PC-9 (cell line): ENCODE measurements at regions of chr1 and their contacts with region 1.

Region 1: DNA sequence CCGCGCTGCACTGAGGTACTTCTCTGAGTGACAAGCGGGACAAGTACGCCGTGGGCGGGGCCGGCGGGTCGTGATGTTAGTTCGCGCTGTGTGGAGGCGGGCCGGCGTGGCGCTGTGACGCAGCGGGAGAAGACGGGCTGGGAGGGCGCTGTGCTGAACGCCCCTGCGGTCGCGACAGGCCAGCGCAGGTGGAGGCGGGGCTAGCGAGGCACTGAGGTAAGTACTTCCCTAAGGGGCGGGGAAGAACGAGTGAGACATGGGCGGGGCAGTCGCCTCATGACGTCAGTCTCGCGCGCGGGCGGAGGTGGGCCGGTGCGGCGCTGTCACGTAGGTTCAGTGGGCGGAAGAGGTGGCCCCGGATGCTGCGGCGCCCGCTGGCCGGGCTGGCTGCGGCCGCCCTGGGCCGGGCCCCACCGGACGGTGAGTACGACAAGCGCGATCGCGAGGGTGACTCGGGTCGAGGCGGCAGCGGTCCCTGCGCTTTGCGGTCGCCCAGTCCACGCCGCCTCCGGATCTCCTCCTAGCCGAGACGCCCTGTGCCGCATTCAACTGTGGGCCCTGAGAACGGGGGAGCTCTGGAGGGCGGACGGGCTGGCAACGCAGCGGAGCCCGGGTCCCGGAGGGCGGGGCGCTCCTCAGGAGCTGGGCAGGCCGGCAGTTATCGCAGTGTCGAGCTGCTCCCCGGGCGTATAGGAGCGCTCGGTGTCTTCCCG is at the start of gene GUK1:
- DNase-seq: peak; percentile 98 to 100
- H3K4me3 ChIP-seq: peak within 1 kb of the TSS; percentile 90
- H3K27ac ChIP-seq: peak within 1 kb of the TSS; percentile 64
- H3K4me1 ChIP-seq: peaks cover 9% of the 10 kb centered on the region
- H3K27me3 ChIP-seq: no peaks in the 10 kb centered on the region
- CTCF ChIP-seq: no peak; the same call in 1 of the 2 replicates
- total RNA-seq, gene GUK1: 239 and 278 TPM in 2 replicates

Region 2: DNA sequence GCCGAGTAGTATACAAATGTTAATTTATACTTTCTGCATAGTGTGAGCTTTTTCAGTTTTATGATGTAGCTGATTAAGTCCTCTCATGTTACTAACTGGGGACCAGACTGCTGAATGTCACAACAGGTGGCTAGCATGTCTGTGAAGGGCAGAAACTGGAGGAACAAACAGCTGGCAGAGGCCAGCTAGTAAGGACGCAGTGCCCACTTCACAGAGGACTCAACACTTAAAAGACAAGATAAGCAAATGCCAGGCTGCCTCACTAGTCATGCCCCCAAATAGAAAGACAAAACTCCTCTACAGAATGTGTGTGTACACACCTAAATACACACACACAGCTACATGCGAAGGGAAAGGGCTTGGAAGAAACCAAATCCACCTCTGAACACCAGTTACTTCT is 650.5 kb before region 1 on chr1:
- CTCF ChIA-PET with region 1: no interaction called
- POLR2A ChIA-PET with region 1: no interaction called
- intact Hi-C with region 1: loop called (anchors 10 kb)
- DNase-seq: no peak
- H3K4me3 ChIP-seq: no peak overlapping the region
- H3K27ac ChIP-seq: no peak overlapping the region
- H3K4me1 ChIP-seq: no peaks in the 10 kb centered on the region
- H3K27me3 ChIP-seq: no peaks in the 10 kb centered on the region
- CTCF ChIP-seq: no peak

Region 3: GRCh38 chr1:228082135-228082891 is 57.8 kb before region 1 on chr1 and contains the start of gene ARF1:
- CTCF ChIA-PET with region 1: no interaction called
- POLR2A ChIA-PET with region 1: no interaction called
- intact Hi-C with region 1: loop called (anchors 2 kb)
- DNase-seq: peak; percentile 70 to 95
- H3K4me3 ChIP-seq: peak within 1 kb of the TSS; percentile 100
- H3K27ac ChIP-seq: peak within 1 kb of the TSS; percentile 78
- H3K4me1 ChIP-seq: peaks cover 38% of the 10 kb centered on the region
- H3K27me3 ChIP-seq: no peaks in the 10 kb centered on the region
- CTCF ChIP-seq: no peak
- total RNA-seq, gene ARF1: 431 and 595 TPM in 2 replicates

Region 4: GRCh38 chr1:228094432-228095016 is 45.6 kb before region 1 on chr1:
- CTCF ChIA-PET with region 1: no interaction called
- POLR2A ChIA-PET with region 1: interaction called, 10 read pairs
- intact Hi-C with region 1: no loop called
- DNase-seq: no peak
- H3K4me3 ChIP-seq: no peak overlapping the region
- H3K27ac ChIP-seq: no peak overlapping the region
- H3K4me1 ChIP-seq: peaks cover 24% of the 10 kb centered on the region
- H3K27me3 ChIP-seq: no peaks in the 10 kb centered on the region
- CTCF ChIP-seq: no peak

Region 5: GRCh38 chr1:228109073-228109961 is 30.8 kb before region 1 on chr1 and contains the start of gene MRPL55:
- CTCF ChIA-PET with region 1: no interaction called
- POLR2A ChIA-PET with region 1: no interaction called
- intact Hi-C with region 1: loop called (anchors 1 kb)
- DNase-seq: peak; percentile 90 to 99
- H3K4me3 ChIP-seq: peak within 1 kb of the TSS; percentile 97
- H3K27ac ChIP-seq: no peak within 1 kb of the TSS
- H3K4me1 ChIP-seq: peaks cover 6% of the 10 kb centered on the region
- H3K27me3 ChIP-seq: no peaks in the 10 kb centered on the region
- CTCF ChIP-seq: no peak
- total RNA-seq, gene MRPL55: 81.0 and 84.4 TPM in 2 replicates

Region 6: DNA sequence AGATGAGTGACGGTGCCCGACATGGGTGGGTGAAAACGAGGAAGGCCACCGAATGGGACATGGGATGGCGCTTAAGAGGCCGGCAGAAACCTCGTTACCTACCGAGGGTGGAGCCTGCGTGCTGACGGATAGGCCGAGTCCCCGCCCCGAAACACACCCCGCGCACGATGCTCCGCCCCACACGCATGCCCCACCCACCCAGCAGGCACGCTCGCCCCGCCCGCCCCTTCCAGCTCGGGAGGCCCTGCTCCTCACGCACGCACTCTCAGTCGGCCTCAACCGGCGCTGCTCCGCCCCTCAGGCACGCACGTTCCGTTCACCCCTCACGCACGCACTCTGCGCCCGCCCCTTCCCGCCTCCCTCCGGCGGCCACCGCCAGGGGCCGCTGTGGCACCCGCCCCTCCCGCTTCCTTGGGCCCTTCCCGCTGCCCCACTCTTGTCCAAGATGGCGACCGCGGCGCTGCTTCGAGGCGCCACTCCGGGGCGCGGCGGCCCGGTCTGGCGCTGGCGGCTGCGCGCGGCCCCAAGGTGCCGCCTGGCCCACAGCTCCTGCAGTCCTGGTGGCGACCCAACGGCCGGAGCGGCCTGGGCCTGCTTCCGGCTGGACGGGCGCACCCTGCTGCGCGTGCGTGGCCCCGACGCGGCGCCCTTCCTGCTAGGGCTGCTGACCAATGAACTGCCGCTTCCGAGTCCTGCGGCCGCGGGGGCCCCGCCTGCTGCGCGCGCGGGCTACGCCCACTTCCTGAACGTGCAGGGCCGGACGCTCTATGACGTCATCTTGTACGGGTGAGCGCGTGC is 25.5 kb after region 1 on chr1 and contains the start of gene IBA57:
- CTCF ChIA-PET with region 1: interaction called, 11 read pairs
- POLR2A ChIA-PET with region 1: no interaction called
- intact Hi-C with region 1: loop called (anchors 1 kb)
- DNase-seq: peak; percentile 93 to 100
- H3K4me3 ChIP-seq: peak within 1 kb of the TSS; percentile 88
- H3K27ac ChIP-seq: peak within 1 kb of the TSS; percentile 89
- H3K4me1 ChIP-seq: peaks cover 13% of the 10 kb centered on the region
- H3K27me3 ChIP-seq: no peaks in the 10 kb centered on the region
- CTCF ChIP-seq: peak; percentile 79
- total RNA-seq, gene IBA57: 7.8 and 13.8 TPM in 2 replicates

Region 7: DNA sequence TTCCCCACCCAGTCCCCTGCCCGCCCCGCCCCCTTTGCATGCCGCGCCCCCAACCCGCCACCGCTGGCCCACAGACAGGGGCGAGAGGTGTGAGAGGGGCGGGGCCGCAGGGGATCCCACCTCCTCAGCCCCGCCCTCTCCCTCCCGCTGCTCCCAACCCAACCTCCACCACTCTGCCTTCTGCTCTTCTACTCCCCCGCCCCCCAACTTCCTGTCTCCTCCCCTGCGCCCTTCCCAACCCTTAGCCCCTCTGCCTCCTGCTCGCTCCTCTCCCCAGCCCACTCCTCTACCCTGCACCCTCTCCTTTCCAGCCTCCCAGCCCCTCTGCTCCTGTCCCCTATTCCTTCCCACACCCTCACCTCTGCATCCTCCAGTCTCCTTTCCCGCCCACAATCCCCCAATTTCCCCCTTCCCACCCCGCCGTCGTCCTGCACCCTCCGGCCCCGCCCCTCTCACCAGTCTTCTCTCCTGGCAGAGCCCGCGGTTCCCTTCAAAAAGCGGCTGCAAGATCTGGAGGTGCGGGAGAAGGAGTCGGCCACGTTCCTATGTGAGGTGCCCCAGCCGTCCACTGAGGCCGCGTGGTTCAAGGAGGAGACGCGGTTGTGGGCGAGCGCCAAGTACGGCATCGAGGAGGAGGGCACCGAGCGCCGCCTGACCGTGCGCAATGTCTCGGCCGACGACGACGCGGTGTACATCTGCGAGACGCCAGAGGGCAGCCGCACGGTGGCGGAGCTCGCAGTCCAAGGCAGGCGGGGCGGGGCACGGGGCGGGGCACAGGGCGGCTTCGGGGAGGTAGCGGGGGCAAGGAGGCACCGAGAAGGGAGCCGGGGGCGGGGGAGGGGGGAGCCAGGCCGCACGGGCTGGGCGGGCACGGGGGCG is 73.1 kb after region 1 on chr1:
- CTCF ChIA-PET with region 1: no interaction called
- POLR2A ChIA-PET with region 1: no interaction called
- intact Hi-C with region 1: loop called (anchors 1 kb)
- DNase-seq: peak; percentile 71 to 88
- H3K4me3 ChIP-seq: peak overlapping the region; percentile 62
- H3K27ac ChIP-seq: no peak overlapping the region
- H3K4me1 ChIP-seq: peaks cover 9% of the 10 kb centered on the region
- H3K27me3 ChIP-seq: no peaks in the 10 kb centered on the region
- CTCF ChIP-seq: peak; percentile 60

Region 8: DNA sequence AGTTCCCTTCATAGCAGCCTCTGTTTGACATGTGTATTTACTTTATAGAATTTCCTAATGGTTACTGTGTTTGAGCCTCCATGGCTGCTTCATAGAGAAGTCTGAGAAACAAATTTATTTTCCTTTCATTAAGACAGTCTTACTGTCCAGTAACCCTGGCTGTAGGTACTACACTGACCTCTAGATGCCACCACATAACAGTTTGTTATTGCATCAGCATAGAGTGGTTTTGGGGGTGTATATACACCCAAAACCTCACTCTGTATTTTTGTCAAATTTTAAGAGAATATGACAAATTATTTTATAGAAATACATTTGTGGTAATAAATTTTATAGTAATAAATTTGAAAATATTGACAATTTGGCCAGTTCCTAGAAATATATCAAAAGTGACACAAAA is 125.1 kb after region 1 on chr1:
- CTCF ChIA-PET with region 1: no interaction called
- POLR2A ChIA-PET with region 1: no interaction called
- intact Hi-C with region 1: no loop called
- DNase-seq: no peak
- H3K4me3 ChIP-seq: no peak overlapping the region
- H3K27ac ChIP-seq: no peak overlapping the region
- H3K4me1 ChIP-seq: no peaks in the 10 kb centered on the region
- H3K27me3 ChIP-seq: no peaks in the 10 kb centered on the region
- CTCF ChIP-seq: peak; percentile 47; the same call in 1 of the 2 replicates